CD4-positive, alpha-beta memory T cell (primary cell): ENCODE measurements at regions of chr12 and their contacts with region 1.

Region 1: GRCh38 chr12:104312202-104312601 is 8.7 kb downstream of the EID3 start:
- DNase-seq: no peak
- H3K4me3 ChIP-seq: no peak overlapping the region
- H3K4me3 Mint-ChIP-seq: no peak overlapping the region
- H3K27ac ChIP-seq: no peak overlapping the region
- H3K27ac Mint-ChIP-seq: no peak overlapping the region
- H3K4me1 ChIP-seq: peaks cover 3% of the 10 kb centered on the region
- H3K4me1 Mint-ChIP-seq: peaks cover 8 to 19% (median 15%) of the 10 kb centered on the region in 4 donors
- H3K27me3 ChIP-seq: no peaks in the 10 kb centered on the region
- H3K27me3 Mint-ChIP-seq: no peaks in the 10 kb centered on the region

Region 2: GRCh38 chr12:104323899-104324298 is 11.7 kb after region 1 on chr12:
- CTCF ChIA-PET with region 1: interaction called, 3 read pairs
- POLR2A ChIA-PET with region 1: no interaction called
- intact Hi-C with region 1: loop called (anchors 1 kb)
- DNase-seq: no peak
- H3K4me3 ChIP-seq: no peak overlapping the region
- H3K4me3 Mint-ChIP-seq: no peak overlapping the region
- H3K27ac ChIP-seq: no peak overlapping the region
- H3K27ac Mint-ChIP-seq: peak overlapping the region in 1 of 7 donors; percentile 49
- H3K4me1 ChIP-seq: no peaks in the 10 kb centered on the region
- H3K4me1 Mint-ChIP-seq: no peaks in the 10 kb centered on the region
- H3K27me3 ChIP-seq: no peaks in the 10 kb centered on the region
- H3K27me3 Mint-ChIP-seq: no peaks in the 10 kb centered on the region

Region 3: GRCh38 chr12:104399740-104400612 is 87.8 kb after region 1 on chr12:
- CTCF ChIA-PET with region 1: no interaction called
- POLR2A ChIA-PET with region 1: no interaction called
- intact Hi-C with region 1: no loop called
- DNase-seq: no peak
- H3K4me3 ChIP-seq: no peak overlapping the region
- H3K4me3 Mint-ChIP-seq: no peak overlapping the region
- H3K27ac ChIP-seq: no peak overlapping the region
- H3K27ac Mint-ChIP-seq: peak overlapping the region in 2 of 7 donors; percentile 7 to 28
- H3K4me1 ChIP-seq: no peaks in the 10 kb centered on the region
- H3K4me1 Mint-ChIP-seq: peaks cover 4 to 11% (median 7%) of the 10 kb centered on the region in 4 donors
- H3K27me3 ChIP-seq: no peaks in the 10 kb centered on the region
- H3K27me3 Mint-ChIP-seq: no peaks in the 10 kb centered on the region